ENCODE measurements at regions of chr2 and their contacts with region 1.

Region 1: GRCh38 chr2:207334624-207335371 is 169.1 kb upstream of the KLF7 start:
- DNase-seq: peak; percentile 81
- ATAC-seq: peak; percentile 80 to 90

Region 2: GRCh38 chr2:207223051-207223450 is 111.7 kb before region 1 on chr2:
- intact Hi-C with region 1: loop called in 1 of 2 experiments (anchors 5 kb)
- DNase-seq: no peak
- ATAC-seq: no peak

Region 3: GRCh38 chr2:207253666-207254345 is 81.0 kb before region 1 on chr2:
- intact Hi-C with region 1: no loop called
- DNase-seq: no peak
- ATAC-seq: peak in 1 of 2 donors; percentile 44

Region 4: GRCh38 chr2:207283356-207283755 is 51.4 kb before region 1 on chr2:
- intact Hi-C with region 1: no loop called
- DNase-seq: no peak
- ATAC-seq: peak; percentile 38 to 80

Region 5: GRCh38 chr2:207394812-207395534 is 60.2 kb after region 1 on chr2:
- intact Hi-C with region 1: no loop called
- DNase-seq: peak; percentile 64
- ATAC-seq: peak in 1 of 2 donors; percentile 95

Region 6: GRCh38 chr2:207408086-207408794 is 73.4 kb after region 1 on chr2:
- intact Hi-C with region 1: loop called in 1 of 2 experiments (anchors 5 kb)
- DNase-seq: no peak
- ATAC-seq: no peak

Measured in left cardiac atrium (tissue), 4 donors.